GM10248 (cell line): ENCODE measurements at regions of chr10 and their contacts with region 1.

Region 1: DNA sequence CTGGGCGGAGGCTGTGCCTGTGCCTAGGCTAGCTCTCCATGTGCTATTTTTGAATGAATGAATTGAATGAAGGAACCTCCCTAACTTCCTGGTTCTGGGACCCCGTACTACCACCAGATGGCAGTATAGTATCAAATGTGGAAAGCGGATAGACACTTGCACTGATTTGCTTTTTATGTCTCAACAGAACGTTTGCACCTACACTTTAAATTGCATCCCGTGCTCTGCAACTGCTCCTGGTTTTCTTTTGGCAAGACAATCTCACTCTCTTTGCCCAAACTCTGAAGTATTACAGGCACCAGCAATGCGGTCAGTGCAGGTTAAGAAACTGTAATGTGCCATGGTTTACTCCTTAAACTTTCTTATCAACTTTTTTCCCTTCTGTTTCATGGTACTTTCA is 6.5 kb downstream of the FZD8 start:
- DNase-seq: peak; percentile 58
- CTCF ChIP-seq: peak; percentile 85

Region 2: GRCh38 chr10:36880898-36881297 is 1245.3 kb after region 1 on chr10:
- CTCF ChIA-PET with region 1: interaction called, 49 read pairs
- POLR2A ChIA-PET with region 1: no interaction called
- DNase-seq: no peak
- CTCF ChIP-seq: peak; percentile 38